PC-9 (cell line): ENCODE measurements at regions of chr21 and their contacts with region 1.

Region 1: DNA sequence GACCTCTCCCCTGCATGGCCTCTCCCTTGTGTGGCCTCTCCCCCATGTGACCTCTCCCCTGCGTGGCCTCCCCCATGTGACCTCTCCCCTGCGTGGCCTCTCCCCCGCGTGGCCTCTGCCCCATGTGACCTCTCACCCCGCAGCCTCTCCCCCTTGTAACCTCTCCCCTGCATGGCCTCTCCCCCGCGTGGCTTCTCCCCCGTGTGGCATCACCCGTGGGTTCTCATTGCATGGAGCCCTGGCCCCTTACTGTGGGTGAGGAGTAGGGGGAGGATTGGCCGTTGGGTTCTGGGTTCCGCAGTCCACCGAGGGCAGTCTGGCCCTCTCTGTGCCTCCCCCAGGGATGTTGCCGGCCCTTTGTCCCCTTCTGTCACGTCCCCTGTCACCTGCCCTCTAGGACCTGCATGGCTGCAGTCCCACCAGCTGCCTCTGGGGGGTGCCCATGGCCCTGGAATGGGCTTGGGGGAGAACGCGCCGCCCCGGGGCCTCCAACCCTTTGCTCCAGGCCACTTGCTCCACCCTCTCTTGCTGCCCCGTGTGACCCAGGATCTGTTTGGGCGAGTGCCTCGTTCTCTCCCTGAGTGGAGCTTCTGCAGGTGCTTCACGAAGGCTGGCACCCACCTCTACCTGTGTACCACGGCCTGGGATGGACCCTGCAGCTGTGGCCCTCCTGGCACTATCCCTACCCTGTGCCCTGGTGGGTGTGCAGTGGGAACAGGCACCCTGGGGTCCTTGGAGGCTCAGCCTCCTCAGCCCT is 21.3 kb downstream of the RRP1 start:
- DNase-seq: peak in 1 of 2 experiments; percentile 84
- H3K4me3 ChIP-seq: no peak overlapping the region
- H3K27ac ChIP-seq: no peak overlapping the region
- H3K4me1 ChIP-seq: peaks cover 7% of the 10 kb centered on the region
- H3K27me3 ChIP-seq: no peaks in the 10 kb centered on the region
- CTCF ChIP-seq: peak; percentile 91

Region 2: GRCh38 chr21:43938751-43939442 is 128.2 kb after region 1 on chr21:
- CTCF ChIA-PET with region 1: interaction called, 3 read pairs
- POLR2A ChIA-PET with region 1: no interaction called
- intact Hi-C with region 1: loop called (anchors 2 kb)
- DNase-seq: peak in 1 of 2 experiments; percentile 79
- H3K4me3 ChIP-seq: peak overlapping the region; percentile 44; the same call in 1 of the 2 replicates
- H3K27ac ChIP-seq: no peak overlapping the region
- H3K4me1 ChIP-seq: no peaks in the 10 kb centered on the region
- H3K27me3 ChIP-seq: no peaks in the 10 kb centered on the region
- CTCF ChIP-seq: peak; percentile 86

Region 3: DNA sequence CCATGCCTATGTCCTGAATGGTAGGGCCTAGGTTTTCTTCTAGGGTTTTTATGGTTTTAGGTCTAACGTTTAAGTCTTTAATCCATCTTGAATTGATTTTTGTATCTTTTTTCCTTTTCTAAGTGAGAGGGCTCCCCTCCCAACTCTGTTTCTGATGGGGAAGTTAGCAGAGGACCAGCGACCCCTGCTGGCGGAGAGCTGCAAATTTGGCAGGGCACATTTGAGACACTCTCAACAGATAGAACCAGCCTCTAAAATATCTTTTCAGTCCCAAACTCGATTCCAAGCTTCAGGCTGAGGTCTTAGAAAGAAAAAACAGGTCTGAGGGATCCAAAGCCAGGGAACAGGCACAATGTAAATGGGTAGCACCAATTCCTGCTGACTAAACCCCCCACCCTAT is 677.1 kb after region 1 on chr21:
- CTCF ChIA-PET with region 1: no interaction called
- POLR2A ChIA-PET with region 1: no interaction called
- intact Hi-C with region 1: loop called (anchors 10 kb)
- DNase-seq: no peak
- H3K4me3 ChIP-seq: no peak overlapping the region
- H3K27ac ChIP-seq: no peak overlapping the region
- H3K4me1 ChIP-seq: no peaks in the 10 kb centered on the region
- H3K27me3 ChIP-seq: peaks cover 35% of the 10 kb centered on the region
- CTCF ChIP-seq: peak; percentile 62

Region 4: DNA sequence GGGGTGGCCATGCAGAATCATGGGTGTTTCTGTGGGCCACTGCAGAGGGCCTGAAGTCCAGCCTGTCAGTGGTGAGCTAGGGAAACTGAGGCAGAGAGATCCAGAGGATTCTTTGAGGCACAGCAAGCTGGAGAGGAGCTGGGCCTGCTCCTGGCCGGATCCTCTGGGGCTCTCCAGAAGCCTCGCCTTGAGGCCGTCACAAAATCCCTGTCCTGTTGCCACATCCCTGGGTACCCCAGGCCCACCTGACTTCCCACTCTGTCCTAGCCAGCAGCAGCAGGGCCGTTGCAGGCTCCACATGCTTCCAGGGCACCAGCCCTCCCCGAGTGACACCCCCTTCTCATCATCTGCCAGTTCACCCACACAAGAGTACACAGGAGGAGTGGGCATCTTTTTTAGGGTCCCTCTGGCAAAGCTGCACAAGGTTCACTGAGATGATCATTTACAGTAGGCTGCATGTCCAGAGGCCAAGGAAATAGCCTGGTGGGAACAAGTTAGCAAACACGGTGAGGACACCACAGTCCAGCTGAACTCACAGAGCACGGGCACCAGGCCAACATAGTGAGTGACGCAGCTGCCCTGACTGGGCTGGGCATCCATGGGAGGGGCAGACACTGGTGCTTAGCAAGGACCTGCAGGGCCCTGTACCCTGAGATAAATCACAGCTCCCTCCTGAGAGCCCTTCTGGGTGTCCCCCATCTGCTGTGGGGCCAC is 925.8 kb after region 1 on chr21:
- CTCF ChIA-PET with region 1: no interaction called
- POLR2A ChIA-PET with region 1: no interaction called
- intact Hi-C with region 1: no loop called
- DNase-seq: peak; percentile 74 to 84
- H3K4me3 ChIP-seq: no peak overlapping the region
- H3K27ac ChIP-seq: no peak overlapping the region
- H3K4me1 ChIP-seq: peaks cover 10% of the 10 kb centered on the region; the same call in 1 of the 2 replicates
- H3K27me3 ChIP-seq: peaks cover 26% of the 10 kb centered on the region
- CTCF ChIP-seq: no peak